ENCODE measurements at regions of chr12 and their contacts with region 1.

Region 1: GRCh38 chr12:46304070-46304469 is 35.2 kb upstream of the SLC38A1 start:
- DNase-seq: no peak
- H3K4me3 ChIP-seq: no peak overlapping the region
- CTCF ChIP-seq: no peak
- POLR2A ChIP-seq: no peak

Region 2: DNA sequence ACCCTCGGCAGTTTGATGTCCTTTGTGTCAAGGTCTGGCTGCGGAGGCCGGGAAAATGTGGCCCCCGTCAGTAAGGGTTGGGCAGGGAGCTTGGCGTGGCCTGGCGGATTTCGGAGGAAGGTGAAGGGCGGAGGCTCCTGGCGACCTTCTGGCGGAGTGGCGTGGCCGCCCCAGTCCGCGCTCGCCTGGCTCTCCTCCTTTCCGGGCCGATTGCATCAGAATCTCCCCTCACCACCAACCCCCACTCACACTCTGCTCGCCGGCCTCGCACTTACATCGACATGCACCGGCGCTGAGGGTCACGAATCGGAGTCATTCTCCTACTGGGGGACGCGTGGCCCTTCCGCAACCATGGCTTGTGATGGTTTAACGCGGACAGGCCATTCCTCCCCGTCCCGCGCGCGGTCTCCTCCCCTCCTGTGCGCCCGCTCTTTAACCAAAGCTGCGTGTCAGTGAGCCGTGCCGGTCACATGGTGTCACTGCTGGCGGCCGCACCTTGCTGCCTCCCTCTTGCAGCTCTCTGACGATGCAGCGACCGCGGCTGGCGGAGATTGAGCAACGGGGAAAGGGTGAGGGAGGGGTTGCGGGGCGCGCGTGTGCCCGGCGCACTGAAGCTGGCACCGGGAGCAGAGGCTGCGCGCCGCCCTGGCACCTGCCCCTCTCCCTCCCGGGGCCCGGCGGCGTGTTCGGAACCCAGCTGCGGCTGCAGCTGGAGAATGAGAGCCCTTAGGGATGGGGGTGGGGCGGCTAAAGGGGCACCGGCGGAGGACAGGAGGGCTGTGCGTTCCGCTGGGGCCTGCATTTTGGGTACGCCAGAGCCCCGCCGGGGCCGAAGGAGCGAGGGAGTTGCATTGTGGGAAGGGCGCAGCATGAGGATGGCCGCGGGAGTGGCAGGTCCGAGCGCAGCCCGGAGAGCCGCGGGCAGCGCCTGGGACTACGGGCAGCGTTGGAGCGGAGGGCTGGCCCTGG is 35.2 kb before region 1 on chr12 and contains the start of gene SLC38A1:
- intact Hi-C with region 1: no loop called
- DNase-seq: peak; percentile 84 to 98
- H3K4me3 ChIP-seq: peak within 1 kb of the TSS; percentile 60
- CTCF ChIP-seq: no peak
- POLR2A ChIP-seq: peak in 1 of 2 donors; percentile 5
- total RNA-seq, gene SLC38A1: 87.3 to 118 (median 102) TPM

Region 3: DNA sequence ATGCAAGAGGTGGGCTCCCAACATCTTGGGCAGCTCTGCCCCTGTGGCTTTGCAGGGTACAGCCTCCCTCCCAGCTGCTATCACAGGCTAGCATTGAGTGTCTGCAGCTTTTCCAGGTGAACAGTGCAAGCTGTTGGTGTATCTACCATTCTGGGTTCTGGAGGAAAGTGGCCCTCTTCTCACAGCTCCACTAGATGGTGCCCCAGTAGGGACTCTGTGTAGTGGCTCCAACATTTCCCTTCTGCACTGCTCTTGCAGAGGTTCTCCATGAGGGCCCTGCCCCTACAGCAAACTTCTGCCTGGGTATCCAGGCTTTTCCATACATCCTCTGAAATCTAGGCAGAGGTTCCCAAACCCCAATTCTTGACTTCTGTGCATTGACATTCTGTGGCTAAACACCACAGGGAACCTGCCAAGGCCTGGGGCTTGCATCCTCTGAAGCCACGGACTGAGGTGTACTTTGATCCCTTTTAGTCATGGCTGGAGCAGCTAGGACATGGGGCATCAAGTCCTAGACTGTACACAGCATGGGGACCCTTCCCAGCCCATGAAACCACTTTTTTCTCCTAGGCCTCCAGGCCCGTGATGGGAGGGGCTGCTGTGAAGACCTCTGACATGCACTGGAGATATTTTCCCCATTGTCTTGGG is 11.2 kb before region 1 on chr12:
- intact Hi-C with region 1: loop called (anchors 2 kb)
- DNase-seq: no peak
- H3K4me3 ChIP-seq: no peak overlapping the region
- CTCF ChIP-seq: no peak
- POLR2A ChIP-seq: no peak

Region 4: GRCh38 chr12:46661110-46661845 is 357.2 kb after region 1 on chr12:
- intact Hi-C with region 1: no loop called
- DNase-seq: peak in 1 of 2 donors; percentile 42
- H3K4me3 ChIP-seq: no peak overlapping the region
- CTCF ChIP-seq: peak in 1 of 3 donors; percentile 82
- POLR2A ChIP-seq: no peak